A673 (cell line): ENCODE measurements at regions of chr3 and their contacts with region 1.

Region 1: DNA sequence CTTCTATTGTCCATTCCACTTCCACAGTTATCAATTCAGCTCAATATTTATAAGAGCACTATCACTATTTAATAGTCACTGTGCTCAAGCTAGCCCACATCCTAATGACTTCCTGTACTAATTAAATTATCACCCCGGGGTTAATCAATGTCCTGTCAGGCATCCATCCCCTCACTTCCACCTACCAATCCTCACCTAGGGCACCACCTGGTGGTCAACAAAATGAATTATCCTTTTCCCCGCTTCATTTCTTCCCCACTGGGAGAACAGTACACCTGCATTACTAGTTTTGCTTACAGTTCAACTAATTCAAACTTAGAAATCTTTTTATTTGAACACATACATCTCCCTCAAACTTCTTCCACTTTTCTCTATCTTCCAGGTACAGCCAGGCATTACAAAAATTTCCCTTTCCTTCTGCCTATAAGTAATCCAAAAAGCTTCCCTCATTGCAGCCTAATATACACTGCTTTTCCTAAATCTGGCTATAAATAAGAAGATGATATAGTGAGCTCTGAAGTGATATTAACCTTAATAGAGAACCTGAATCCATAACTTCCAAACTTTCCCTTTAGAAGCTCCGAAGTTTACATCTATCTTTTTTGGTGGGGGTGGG is 68.5 kb downstream of the TMCC1 start:
- DNase-seq: peak; percentile 68
- H3K4me3 ChIP-seq: no peak overlapping the region
- H3K27ac ChIP-seq: no peak overlapping the region
- H3K4me1 ChIP-seq: peaks cover 11% of the 10 kb centered on the region
- H3K27me3 ChIP-seq: no peaks in the 10 kb centered on the region
- CTCF ChIP-seq: peak; percentile 78

Region 2: DNA sequence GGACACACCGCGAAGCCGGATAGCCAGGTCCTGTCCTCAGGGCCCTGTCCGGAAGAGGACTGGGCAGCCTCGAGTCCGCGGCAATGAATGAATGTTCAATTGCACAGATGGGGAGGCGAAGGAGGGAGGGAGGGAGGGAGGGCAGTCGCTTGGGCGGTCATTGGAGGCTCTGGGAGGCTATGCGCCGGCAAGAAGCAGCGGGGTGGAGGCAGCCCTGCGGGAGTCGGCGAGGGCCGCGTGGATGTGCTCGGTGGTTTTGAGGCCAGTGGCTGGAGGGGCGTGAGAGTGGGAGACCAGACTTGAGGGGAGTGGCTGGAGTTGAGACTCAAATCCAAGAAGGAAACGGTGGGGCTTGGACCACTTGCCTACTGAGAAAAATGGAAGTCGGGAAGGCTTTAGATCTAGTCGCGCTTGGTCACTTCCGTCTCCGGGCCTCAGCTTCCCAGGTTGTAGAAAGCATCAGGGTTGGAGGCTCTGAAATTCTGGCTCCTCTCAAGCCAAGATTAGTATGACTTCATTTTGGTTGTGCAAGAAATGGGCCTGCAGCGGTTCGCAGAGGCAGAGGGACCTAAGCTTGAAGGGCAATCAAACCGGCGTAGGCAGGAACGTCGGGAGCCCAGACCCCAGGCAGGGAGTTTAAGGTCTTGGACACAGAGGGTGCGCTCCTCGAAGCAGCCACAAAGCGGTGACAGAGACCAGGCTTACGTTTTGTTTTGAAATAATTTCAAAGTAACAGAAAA is 197.4 kb before region 1 on chr3:
- CTCF ChIA-PET with region 1: interaction called, 7 read pairs
- POLR2A ChIA-PET with region 1: no interaction called
- intact Hi-C with region 1: loop called (anchors 2 kb)
- DNase-seq: peak; percentile 91
- H3K4me3 ChIP-seq: peak overlapping the region; percentile 52
- H3K27ac ChIP-seq: peak overlapping the region; percentile 75
- H3K4me1 ChIP-seq: peaks cover 20% of the 10 kb centered on the region
- H3K27me3 ChIP-seq: no peaks in the 10 kb centered on the region
- CTCF ChIP-seq: peak; percentile 84

Region 3: DNA sequence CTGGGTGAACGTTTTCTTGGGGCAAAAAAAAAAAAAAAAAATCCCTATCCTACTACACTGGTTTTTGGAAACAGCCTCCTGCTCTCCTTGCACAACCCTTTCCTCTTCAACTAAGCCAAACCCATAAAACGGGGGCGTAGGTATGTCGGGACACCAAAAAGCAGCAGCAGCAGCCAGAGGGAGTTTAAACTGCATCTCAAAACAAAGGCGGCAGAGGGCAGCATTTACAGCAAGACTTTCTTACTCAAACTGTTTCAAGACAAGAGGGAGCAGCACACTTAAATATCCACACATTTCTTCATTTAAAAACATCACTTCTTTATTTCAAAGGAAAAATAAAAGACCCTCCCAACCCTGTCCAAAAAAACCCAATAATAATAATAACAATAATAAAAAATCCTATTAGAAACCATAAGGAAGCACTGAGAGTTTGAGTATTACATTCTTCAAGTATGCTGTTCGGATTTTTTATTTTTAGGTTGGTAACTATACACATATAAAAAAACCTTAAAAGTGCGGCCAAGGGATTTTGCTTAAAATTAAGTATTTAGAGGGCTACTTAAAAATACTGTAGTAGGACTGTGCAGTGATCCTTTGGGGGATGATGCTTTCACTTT is 174.7 kb before region 1 on chr3:
- CTCF ChIA-PET with region 1: interaction called, 3 read pairs
- POLR2A ChIA-PET with region 1: no interaction called
- intact Hi-C with region 1: loop called (anchors 1 kb)
- DNase-seq: peak; percentile 85
- H3K4me3 ChIP-seq: no peak overlapping the region
- H3K27ac ChIP-seq: no peak overlapping the region
- H3K4me1 ChIP-seq: peaks cover 28% of the 10 kb centered on the region
- H3K27me3 ChIP-seq: no peaks in the 10 kb centered on the region
- CTCF ChIP-seq: peak; percentile 85

Region 4: GRCh38 chr3:129878372-129878771 is 53.3 kb after region 1 on chr3:
- CTCF ChIA-PET with region 1: no interaction called
- POLR2A ChIA-PET with region 1: no interaction called
- intact Hi-C with region 1: no loop called
- DNase-seq: no peak
- H3K4me3 ChIP-seq: no peak overlapping the region
- H3K27ac ChIP-seq: no peak overlapping the region
- H3K4me1 ChIP-seq: no peaks in the 10 kb centered on the region
- H3K27me3 ChIP-seq: no peaks in the 10 kb centered on the region
- CTCF ChIP-seq: no peak

Region 5: GRCh38 chr3:129893581-129894070 is 68.6 kb after region 1 on chr3 and contains the start of gene TMCC1:
- CTCF ChIA-PET with region 1: interaction called, 7 read pairs
- POLR2A ChIA-PET with region 1: no interaction called
- intact Hi-C with region 1: loop called (anchors 5 kb)
- DNase-seq: peak; percentile 92
- H3K4me3 ChIP-seq: peak within 1 kb of the TSS; percentile 89
- H3K27ac ChIP-seq: peak within 1 kb of the TSS; percentile 81
- H3K4me1 ChIP-seq: peaks cover 44% of the 10 kb centered on the region
- H3K27me3 ChIP-seq: no peaks in the 10 kb centered on the region
- CTCF ChIP-seq: no peak
- total RNA-seq, gene TMCC1: 29.4 and 32.8 TPM in 2 replicates